ENCODE measurements at regions of chr15 and their contacts with region 1.

Region 1: DNA sequence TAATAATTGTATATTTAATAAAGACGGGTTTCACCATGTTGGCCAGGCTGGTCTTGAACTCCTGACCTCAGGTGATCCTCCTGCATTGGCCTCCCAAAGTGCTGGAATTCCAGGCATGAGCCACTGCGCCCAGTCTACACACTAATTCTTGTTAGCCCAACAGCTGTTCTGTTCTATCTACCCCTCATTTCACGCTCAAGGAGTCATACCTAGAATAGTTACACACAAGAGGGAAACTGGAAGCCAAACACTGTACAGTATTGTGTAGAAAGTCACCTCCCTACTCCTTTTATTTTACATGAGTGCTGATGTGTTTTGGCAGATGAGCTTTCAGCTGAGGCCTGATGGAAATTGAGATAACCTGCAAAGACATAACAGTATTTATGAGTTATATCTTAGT is 13.4 kb upstream of the CTDSPL2 start:
- DNase-seq: no peak
- ATAC-seq: no peak
- H3K4me3 ChIP-seq: no peak overlapping the region
- H3K27ac ChIP-seq: no peak overlapping the region
- H3K4me1 ChIP-seq: no peaks in the 10 kb centered on the region
- H3K27me3 ChIP-seq: no peaks in the 10 kb centered on the region
- CTCF ChIP-seq: no peak
- POLR2A ChIP-seq: no peak
- RAD21 ChIP-seq: no peak

Region 2: GRCh38 chr15:44308415-44308814 is 105.6 kb before region 1 on chr15:
- CTCF ChIA-PET with region 1: no interaction called
- POLR2A ChIA-PET with region 1: no interaction called
- RAD21 ChIA-PET with region 1: no interaction called
- intact Hi-C with region 1: loop called (anchors 10 kb)
- DNase-seq: no peak
- ATAC-seq: no peak
- H3K4me3 ChIP-seq: no peak overlapping the region
- H3K27ac ChIP-seq: no peak overlapping the region
- H3K4me1 ChIP-seq: no peaks in the 10 kb centered on the region
- H3K27me3 ChIP-seq: no peaks in the 10 kb centered on the region
- CTCF ChIP-seq: no peak
- POLR2A ChIP-seq: no peak
- RAD21 ChIP-seq: no peak

Region 3: DNA sequence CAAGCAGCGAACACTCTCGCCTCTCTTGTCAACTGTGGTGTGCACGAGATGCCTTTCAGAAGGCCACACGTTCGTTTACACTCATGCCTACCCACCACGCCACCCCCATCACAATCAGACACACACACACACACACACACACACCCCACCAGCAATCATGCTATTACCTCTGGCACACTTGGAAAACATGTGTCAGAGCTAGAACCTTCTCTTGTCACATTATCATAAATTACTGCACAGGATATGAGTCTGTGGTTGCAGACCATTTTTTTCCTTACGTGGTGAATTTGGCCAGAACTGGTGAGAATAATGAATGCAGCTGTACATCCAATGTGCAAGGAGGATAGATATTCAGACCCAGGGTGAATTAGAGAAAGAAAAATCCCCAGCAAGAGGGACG is 374.7 kb after region 1 on chr15:
- CTCF ChIA-PET with region 1: no interaction called
- POLR2A ChIA-PET with region 1: no interaction called
- RAD21 ChIA-PET with region 1: no interaction called
- intact Hi-C with region 1: no loop called
- DNase-seq: no peak
- ATAC-seq: no peak
- H3K4me3 ChIP-seq: no peak overlapping the region
- H3K27ac ChIP-seq: no peak overlapping the region
- H3K4me1 ChIP-seq: peaks cover 2 to 4% of the 10 kb centered on the region in 2 experiments; a peak in 3 of 4 replicates
- H3K27me3 ChIP-seq: no peaks in the 10 kb centered on the region
- CTCF ChIP-seq: no peak
- POLR2A ChIP-seq: no peak
- RAD21 ChIP-seq: no peak

Measured in HCT116 (cell line).